Head of caudate nucleus (tissue), 42 donors: ENCODE measurements at regions of chr13 and their contacts with region 1.

Region 1: DNA sequence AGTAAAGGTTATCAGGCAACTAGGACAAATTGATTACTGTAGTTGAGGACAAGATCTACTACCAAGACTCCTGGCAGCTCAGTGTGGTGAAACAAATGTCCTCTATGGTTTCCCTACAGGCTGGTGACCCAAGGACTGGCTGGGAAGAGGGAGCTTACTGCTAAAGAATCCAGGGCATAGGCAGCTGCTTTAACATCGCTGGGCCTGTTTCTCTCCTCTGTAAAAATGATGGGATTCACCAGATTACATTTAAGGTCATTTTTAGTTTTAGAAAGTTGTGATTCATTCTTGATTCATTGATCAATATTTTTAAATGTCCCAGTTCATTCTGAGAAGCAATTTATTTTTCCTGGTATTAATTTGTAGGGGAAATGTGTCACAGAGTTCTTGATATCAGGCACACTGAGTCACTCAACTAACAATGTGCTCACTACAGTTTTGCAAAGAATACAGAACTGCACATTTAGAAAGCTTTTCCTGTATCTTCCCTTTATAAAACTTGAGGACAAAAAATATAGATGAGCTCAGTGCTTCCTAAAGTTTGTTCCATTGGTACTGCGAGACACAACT is 19.6 kb upstream of the FAM124A start:
- DNase-seq: no peak

Region 2: DNA sequence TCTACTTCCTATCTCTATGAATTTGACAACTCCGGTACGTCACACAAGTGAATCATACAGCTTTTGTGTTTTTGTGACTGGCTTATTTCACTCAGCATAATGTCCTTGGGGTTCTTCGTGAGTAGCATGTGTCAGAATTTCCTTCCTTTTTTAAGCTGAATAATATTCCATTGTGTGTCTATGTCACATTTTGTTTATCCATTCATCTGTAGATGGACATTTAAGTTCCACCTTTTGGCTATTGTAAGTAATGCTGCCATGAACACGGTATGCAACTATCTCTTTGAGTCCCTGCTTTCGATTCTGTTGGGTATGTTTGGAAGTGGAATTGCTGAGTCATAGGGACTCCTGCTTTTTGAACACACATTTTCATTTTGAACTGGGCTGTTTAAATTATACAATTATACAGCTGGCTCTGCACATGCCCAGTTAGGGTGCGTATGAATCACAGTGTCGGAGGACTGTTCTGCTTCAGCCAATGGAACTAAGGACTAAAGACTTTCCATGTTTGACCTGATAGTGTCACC is 48.5 kb before region 1 on chr13:
- intact Hi-C with region 1: loop called (anchors 10 kb)
- DNase-seq: no peak